Right ventricle myocardium superior (tissue), 1 donor: ENCODE measurements at regions of chr11 and their contacts with region 1.

Region 1: DNA sequence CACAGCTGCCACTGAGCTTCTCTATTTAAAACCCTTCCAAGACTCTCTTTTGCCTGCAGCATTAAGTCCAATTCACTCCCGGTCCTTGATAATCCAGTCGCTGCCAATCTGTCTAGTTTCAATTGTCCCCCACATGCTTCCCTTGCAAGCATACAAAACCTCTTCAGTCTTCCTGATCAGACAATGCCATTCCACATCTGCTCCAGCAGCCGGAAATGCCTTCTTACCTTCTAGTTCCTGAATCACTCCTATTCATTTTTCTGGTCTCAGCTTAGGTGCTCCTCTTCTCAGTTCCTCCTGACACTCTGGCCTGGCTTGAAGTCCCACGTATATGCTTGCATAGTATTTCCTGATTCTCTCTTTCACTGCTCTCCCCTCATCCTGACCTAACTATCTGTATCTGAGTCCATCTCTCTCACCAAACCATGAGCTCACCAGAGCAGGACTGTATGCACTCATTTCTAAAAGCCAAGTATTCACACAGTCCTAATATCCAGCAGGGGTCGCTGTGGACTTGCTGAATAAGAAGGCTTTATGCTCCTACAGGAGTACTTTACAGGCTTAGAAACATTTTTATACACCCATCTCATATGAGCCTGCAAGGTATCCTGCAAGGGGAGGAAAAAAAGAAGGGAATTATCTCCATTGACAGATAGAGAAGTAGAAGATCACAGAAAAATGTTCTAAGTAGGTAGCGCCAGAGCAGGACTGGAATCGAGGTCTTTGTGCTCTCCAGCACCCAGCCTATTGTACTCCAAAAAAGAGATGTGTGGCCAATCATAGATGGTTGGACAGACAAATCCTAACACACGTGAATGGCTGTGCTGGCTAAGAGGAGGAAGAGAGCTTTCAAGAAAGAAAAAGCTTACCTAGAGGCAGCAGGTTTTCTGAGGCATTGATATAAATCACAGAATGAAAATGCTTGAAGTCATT is 19.2 kb downstream of the XRRA1 start:
- DNase-seq: peak; percentile 46
- ATAC-seq: peak; percentile 87

Region 2: GRCh38 chr11:74870485-74870884 is 59.2 kb before region 1 on chr11:
- intact Hi-C with region 1: no loop called
- DNase-seq: no peak
- ATAC-seq: no peak

Region 3: GRCh38 chr11:75031771-75032549 is 102.3 kb after region 1 on chr11:
- intact Hi-C with region 1: loop called (anchors 2 kb)
- DNase-seq: peak; percentile 78
- ATAC-seq: peak; percentile 79

Region 4: DNA sequence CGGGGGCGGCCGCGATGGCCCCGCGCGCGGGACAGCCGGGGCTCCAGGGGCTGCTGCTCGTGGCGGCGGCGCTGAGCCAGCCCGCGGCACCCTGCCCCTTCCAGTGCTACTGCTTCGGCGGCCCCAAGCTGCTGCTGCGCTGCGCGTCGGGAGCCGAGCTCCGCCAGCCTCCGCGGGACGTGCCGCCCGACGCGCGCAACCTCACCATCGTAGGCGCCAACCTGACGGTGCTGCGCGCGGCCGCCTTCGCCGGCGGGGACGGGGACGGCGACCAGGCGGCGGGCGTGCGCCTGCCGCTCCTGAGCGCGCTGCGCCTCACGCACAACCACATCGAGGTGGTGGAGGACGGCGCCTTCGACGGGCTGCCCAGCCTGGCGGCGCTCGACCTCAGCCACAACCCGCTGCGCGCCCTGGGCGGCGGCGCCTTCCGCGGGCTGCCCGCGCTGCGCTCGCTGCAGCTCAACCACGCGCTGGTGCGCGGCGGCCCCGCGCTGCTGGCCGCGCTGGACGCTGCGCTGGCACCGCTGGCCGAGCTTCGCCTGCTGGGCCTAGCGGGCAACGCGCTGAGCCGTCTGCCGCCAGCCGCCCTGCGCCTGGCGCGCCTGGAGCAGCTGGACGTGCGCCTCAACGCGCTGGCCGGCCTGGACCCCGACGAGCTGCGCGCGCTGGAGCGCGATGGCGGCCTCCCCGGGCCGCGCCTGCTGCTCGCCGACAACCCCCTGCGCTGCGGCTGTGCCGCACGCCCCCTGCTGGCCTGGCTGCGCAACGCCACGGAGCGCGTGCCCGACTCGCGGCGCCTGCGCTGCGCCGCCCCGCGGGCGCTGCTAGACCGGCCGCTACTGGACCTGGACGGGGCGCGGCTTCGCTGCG is 311.6 kb after region 1 on chr11:
- intact Hi-C with region 1: loop called (anchors 10 kb)
- DNase-seq: peak; percentile 90
- ATAC-seq: peak; percentile 97